ENCODE measurements at regions of chr15 and their contacts with region 1.

Region 1: GRCh38 chr15:30043211-30043655 is 39.5 kb upstream of the GOLGA8J start:
- DNase-seq: no peak
- H3K4me3 ChIP-seq: peak overlapping the region in 24 of 59 donors; percentile 1 to 37 (median 22)
- H3K27ac ChIP-seq: peak overlapping the region in 56 of 59 donors; percentile 56 to 96 (median 88)
- H3K27me3 ChIP-seq: no peaks in the 10 kb centered on the region
- CTCF ChIP-seq: peak in 55 of 56 donors; percentile 49 to 85 (median 66)

Region 2: GRCh38 chr15:29668120-29668602 is 375.1 kb before region 1 on chr15:
- intact Hi-C with region 1: loop called in 1 of 2 experiments (anchors 10 kb)
- DNase-seq: peak; percentile 18 to 85 (median 72)
- H3K4me3 ChIP-seq: no peak overlapping the region
- H3K27ac ChIP-seq: no peak overlapping the region
- H3K27me3 ChIP-seq: no peaks in the 10 kb centered on the region
- CTCF ChIP-seq: peak; percentile 74 to 99 (median 92)

Region 3: GRCh38 chr15:29821416-29822131 is 221.7 kb before region 1 on chr15:
- intact Hi-C with region 1: loop called in 1 of 2 experiments (anchors 10 kb)
- DNase-seq: peak in 8 of 10 donors; percentile 23 to 80 (median 57)
- H3K4me3 ChIP-seq: peak overlapping the region; percentile 53 to 93 (median 80)
- H3K27ac ChIP-seq: peak overlapping the region; percentile 61 to 97 (median 91)
- H3K27me3 ChIP-seq: no peaks in the 10 kb centered on the region
- CTCF ChIP-seq: peak in 13 of 56 donors; percentile 6 to 21 (median 12)

Region 4: GRCh38 chr15:29904757-29905417 is 138.3 kb before region 1 on chr15:
- intact Hi-C with region 1: no loop called
- DNase-seq: no peak
- H3K4me3 ChIP-seq: no peak overlapping the region
- H3K27ac ChIP-seq: peak overlapping the region in 9 of 59 donors; percentile 2 to 56 (median 24)
- H3K27me3 ChIP-seq: no peaks in the 10 kb centered on the region
- CTCF ChIP-seq: no peak

Region 5: GRCh38 chr15:29942143-29942542 is 101.1 kb before region 1 on chr15:
- intact Hi-C with region 1: loop called (anchors 5 kb)
- DNase-seq: peak in 1 of 10 donors; percentile 60
- H3K4me3 ChIP-seq: no peak overlapping the region
- H3K27ac ChIP-seq: peak overlapping the region; percentile 58 to 95 (median 89)
- H3K27me3 ChIP-seq: no peaks in the 10 kb centered on the region
- CTCF ChIP-seq: peak; percentile 32 to 84 (median 64)

Region 6: GRCh38 chr15:30073915-30074314 is 30.7 kb after region 1 on chr15:
- intact Hi-C with region 1: loop called (anchors 5 kb)
- DNase-seq: no peak
- H3K4me3 ChIP-seq: no peak overlapping the region
- H3K27ac ChIP-seq: peak overlapping the region in 13 of 59 donors; percentile 5 to 84 (median 47)
- H3K27me3 ChIP-seq: no peaks in the 10 kb centered on the region
- CTCF ChIP-seq: no peak